Caco-2 (cell line): ENCODE measurements at regions of chr9 and their contacts with region 1.

Region 1: GRCh38 chr9:100714372-100715099 is 136.7 kb downstream of the CAVIN4 start:
- DNase-seq: peak; percentile 57 to 73
- H3K4me3 ChIP-seq: no peak overlapping the region
- H3K4me3 Mint-ChIP-seq: no peak overlapping the region
- H3K27ac Mint-ChIP-seq: no peak overlapping the region
- H3K4me1 ChIP-seq: no peaks in the 10 kb centered on the region
- H3K4me1 Mint-ChIP-seq: no peaks in the 10 kb centered on the region
- H3K27me3 ChIP-seq: no peaks in the 10 kb centered on the region; the same call in 1 of the 2 replicates
- H3K27me3 Mint-ChIP-seq: no peaks in the 10 kb centered on the region
- CTCF ChIP-seq: peak; percentile 74 to 80

Region 2: DNA sequence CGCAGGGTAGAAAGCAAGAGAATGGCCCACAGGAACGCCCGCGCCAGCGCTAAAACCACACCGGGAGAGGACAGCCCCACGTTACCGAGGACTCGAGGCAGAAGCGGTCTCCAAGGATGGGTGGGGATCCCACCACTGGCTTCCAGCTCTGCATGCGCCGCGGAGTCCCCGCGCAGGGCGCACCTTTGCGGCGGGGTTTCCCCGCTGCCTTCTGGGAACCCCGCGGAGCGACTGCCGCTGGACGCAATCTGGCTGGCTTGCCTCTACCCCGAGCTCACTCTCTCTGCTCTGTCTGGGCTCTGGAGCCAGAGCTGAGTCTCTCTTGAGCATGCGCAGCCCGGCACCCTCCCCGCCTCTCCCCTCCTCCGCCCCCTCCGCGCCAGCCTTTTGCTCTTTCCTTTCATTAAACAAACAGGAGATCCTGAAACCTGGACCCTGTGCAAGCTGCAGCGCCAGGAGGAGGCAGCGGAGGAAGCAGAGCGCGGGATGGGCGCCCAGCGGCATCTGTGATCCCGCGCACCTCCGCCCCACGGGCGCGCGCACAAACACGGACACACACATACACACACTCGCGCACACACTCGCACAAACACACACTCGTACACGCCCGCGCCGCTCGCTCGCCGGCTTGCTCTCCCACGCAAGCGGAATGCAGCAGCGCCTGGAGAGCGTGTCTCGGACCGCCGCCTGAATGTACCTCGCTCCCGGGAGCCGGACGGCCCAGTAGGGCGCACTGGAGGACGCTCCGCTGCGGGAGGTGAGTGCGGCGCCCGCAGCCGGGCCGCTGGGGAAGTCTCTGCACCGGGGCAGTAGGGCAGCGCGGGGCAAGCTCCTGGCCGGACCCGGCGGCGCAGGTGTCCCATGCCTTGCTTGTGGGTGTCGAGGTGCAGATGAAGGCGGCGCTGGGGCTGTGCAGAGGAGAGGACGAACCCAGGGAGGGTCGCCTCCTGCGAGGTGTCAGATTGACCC is 314.1 kb after region 1 on chr9 and contains the start of gene PLPPR1:
- CTCF ChIA-PET with region 1: no interaction called
- POLR2A ChIA-PET with region 1: no interaction called
- intact Hi-C with region 1: loop called (anchors 1 kb)
- DNase-seq: peak; percentile 59 to 81
- H3K4me3 ChIP-seq: peak within 1 kb of the TSS; percentile 41
- H3K4me3 Mint-ChIP-seq: peak within 1 kb of the TSS; percentile 84
- H3K27ac Mint-ChIP-seq: no peak within 1 kb of the TSS
- H3K4me1 ChIP-seq: 0 out of 2 replicates have a peak, but pooled peaks cover 3% of the 10 kb centered on the region
- H3K4me1 Mint-ChIP-seq: peaks cover 6% of the 10 kb centered on the region
- H3K27me3 ChIP-seq: peaks cover 3% of the 10 kb centered on the region
- H3K27me3 Mint-ChIP-seq: peaks cover 36% of the 10 kb centered on the region
- CTCF ChIP-seq: no peak
- total RNA-seq, gene PLPPR1: not detected in 2 replicates

Region 3: DNA sequence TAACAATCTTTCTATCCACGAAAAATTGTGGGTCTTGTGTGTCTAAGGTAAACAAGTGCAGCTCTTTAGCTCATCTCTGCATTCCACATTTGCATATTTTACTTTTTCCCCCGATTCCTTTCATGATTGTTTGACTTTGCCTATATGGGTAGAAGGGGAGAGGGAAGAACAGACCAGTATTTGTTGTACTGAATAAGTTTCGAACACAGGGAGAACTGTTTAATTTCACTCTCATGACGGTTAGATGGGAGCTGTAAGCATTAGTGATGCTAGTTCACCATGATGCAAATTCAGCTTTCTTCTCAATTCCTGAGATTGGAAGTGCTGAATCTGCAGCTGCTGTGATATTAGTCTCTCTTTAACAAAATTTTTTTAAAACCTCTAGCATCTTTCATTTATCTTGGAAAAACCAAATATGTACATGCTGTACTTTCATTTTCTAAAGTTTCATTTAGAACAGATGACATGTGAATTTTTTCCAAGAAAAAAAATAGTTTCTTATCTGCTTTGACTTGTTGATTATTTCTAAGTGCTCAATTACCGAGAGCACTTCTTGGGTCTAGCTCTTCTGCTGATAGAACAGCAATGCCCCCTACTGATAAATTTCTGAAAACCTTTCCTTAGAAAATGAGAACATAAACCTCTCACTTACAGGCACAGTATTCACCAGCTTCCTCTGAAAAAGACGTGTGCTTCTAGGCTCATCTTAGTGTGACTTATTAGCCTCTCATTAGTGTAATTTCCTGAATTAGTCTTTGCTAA is 520.8 kb after region 1 on chr9:
- CTCF ChIA-PET with region 1: interaction called, 3 read pairs
- POLR2A ChIA-PET with region 1: no interaction called
- intact Hi-C with region 1: loop called (anchors 1 kb)
- DNase-seq: peak in 1 of 2 experiments; percentile 16
- H3K4me3 ChIP-seq: no peak overlapping the region
- H3K4me3 Mint-ChIP-seq: no peak overlapping the region
- H3K27ac Mint-ChIP-seq: no peak overlapping the region
- H3K4me1 ChIP-seq: no peaks in the 10 kb centered on the region
- H3K4me1 Mint-ChIP-seq: no peaks in the 10 kb centered on the region
- H3K27me3 ChIP-seq: no peaks in the 10 kb centered on the region
- H3K27me3 Mint-ChIP-seq: peaks cover 5% of the 10 kb centered on the region
- CTCF ChIP-seq: peak; percentile 48 to 56